AG04450 (cell line): ENCODE measurements at regions of chr3 and their contacts with region 1.

Region 1: GRCh38 chr3:147191795-147192385 is 214.5 kb downstream of the ZIC4 start:
- DNase-seq: peak; percentile 61
- H3K4me3 ChIP-seq: no peak overlapping the region
- H3K27ac ChIP-seq: no peak overlapping the region
- H3K27me3 ChIP-seq: no peaks in the 10 kb centered on the region
- CTCF ChIP-seq: peak; percentile 85

Region 2: DNA sequence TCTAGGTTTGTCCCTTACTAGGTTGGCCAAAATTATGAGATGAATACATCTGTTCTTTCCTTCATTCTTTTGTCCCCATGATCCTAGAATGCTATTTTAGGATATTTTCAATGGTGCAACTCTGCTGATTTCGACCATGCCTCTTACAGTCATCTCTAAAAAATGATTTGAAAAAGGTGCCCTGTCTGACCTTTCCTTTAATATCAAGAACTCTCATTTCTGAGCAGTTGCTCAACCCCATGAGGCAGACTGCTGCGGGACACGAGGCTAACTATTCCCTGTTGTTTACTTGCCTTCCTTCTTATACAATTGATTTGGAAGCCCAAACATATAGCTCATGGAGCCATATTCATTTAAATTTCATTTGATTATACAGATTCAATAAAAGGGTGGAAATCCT is 737.1 kb before region 1 on chr3:
- CTCF ChIA-PET with region 1: no interaction called
- POLR2A ChIA-PET with region 1: no interaction called
- DNase-seq: no peak
- H3K4me3 ChIP-seq: no peak overlapping the region
- H3K27ac ChIP-seq: no peak overlapping the region
- H3K27me3 ChIP-seq: no peaks in the 10 kb centered on the region
- CTCF ChIP-seq: no peak

Region 3: DNA sequence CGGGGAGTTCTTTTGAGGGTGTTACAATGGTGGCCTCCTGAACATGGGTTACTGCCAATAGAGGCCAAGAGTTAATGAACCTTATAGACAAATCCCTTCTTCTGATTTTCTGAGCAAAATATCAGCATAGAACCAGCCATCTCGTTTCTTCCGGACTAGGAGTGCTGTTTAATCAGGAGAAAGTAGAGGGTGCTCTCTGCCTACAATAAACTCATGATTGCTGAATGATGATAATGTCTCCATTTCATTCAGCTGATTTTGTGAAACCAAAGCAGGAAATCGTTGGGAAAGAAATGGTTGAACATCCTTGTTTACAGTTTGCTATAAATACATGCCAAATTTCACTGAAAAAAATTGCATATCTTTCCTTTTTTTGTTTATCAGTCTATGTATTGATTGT is 444.0 kb before region 1 on chr3:
- CTCF ChIA-PET with region 1: interaction called, 46 read pairs
- POLR2A ChIA-PET with region 1: no interaction called
- DNase-seq: peak; percentile 0
- H3K4me3 ChIP-seq: no peak overlapping the region
- H3K27ac ChIP-seq: no peak overlapping the region
- H3K27me3 ChIP-seq: no peaks in the 10 kb centered on the region
- CTCF ChIP-seq: peak; percentile 56

Region 4: GRCh38 chr3:146817704-146818103 is 374.2 kb before region 1 on chr3:
- CTCF ChIA-PET with region 1: interaction called, 21 read pairs
- POLR2A ChIA-PET with region 1: no interaction called
- DNase-seq: no peak
- H3K4me3 ChIP-seq: no peak overlapping the region
- H3K27ac ChIP-seq: no peak overlapping the region
- H3K27me3 ChIP-seq: no peaks in the 10 kb centered on the region
- CTCF ChIP-seq: 0 out of 2 replicates have a peak, but pooled peaks have one; percentile 21

Region 5: DNA sequence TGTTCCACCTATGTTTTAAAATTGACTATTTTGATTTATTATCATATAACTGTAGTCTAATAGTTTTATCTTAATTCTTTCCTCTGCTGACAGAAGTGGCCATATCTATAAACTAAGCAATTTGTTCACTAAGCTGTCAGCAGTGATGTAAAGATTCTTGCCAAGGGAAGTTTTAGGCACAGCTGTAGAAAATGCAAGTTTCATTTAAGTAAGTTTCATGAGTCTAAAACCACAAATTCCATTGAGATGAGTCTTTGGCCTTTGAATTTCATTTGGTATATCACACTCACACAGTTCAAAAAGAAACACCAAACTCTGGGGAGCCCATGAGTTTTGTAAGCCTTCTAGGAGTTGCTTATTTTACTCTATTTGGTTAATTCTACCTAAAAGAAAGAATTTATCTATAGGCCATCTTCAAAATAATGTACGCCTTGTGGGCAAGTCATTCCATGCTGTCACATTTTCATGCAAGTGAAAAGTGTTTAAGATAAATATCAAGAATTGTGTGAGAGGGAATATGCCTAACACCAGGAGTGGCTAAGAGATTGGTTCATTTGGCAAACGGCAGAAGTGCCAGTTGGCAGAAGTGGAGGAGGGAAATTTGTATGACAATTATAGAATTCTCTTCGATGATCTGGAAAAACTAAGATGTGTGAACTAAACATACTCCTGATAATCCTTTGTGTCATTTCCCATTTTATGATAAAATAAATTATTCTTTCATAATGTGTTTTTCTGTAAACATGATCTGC is 78.4 kb before region 1 on chr3:
- CTCF ChIA-PET with region 1: interaction called, 14 read pairs
- POLR2A ChIA-PET with region 1: no interaction called
- DNase-seq: peak; percentile 75
- H3K4me3 ChIP-seq: no peak overlapping the region
- H3K27ac ChIP-seq: no peak overlapping the region
- H3K27me3 ChIP-seq: no peaks in the 10 kb centered on the region
- CTCF ChIP-seq: no peak

Region 6: GRCh38 chr3:147119989-147120388 is 71.9 kb before region 1 on chr3:
- CTCF ChIA-PET with region 1: interaction called, 53 read pairs
- POLR2A ChIA-PET with region 1: no interaction called
- DNase-seq: peak; percentile 13
- H3K4me3 ChIP-seq: no peak overlapping the region
- H3K27ac ChIP-seq: no peak overlapping the region
- H3K27me3 ChIP-seq: no peaks in the 10 kb centered on the region
- CTCF ChIP-seq: peak; percentile 80

Region 7: DNA sequence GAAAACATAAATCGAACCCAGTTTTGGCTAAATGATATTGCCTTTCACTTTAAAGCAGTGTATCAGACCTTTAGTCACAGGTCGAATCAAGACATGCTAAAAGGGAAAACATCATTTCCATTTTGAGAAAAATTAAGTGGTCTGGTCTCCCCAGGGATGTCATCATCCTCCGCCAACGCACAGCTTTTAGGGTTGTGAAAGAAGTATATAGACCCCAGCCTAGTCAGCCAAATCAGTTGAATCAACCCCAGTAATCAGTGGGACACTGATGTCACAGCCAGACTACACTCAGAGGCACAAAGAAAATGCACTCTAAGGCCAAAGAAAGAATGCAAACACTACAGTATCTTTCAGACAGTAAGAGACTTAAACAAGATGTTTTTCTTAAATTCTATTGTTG is 27.1 kb after region 1 on chr3:
- CTCF ChIA-PET with region 1: interaction called, 17 read pairs
- POLR2A ChIA-PET with region 1: no interaction called
- DNase-seq: no peak
- H3K4me3 ChIP-seq: no peak overlapping the region
- H3K27ac ChIP-seq: no peak overlapping the region
- H3K27me3 ChIP-seq: no peaks in the 10 kb centered on the region
- CTCF ChIP-seq: no peak

Region 8: GRCh38 chr3:147267434-147267833 is 75.5 kb after region 1 on chr3:
- CTCF ChIA-PET with region 1: no interaction called
- POLR2A ChIA-PET with region 1: no interaction called
- DNase-seq: no peak
- H3K4me3 ChIP-seq: no peak overlapping the region
- H3K27ac ChIP-seq: no peak overlapping the region
- H3K27me3 ChIP-seq: no peaks in the 10 kb centered on the region
- CTCF ChIP-seq: no peak